ENCODE measurements at regions of chr11 and their contacts with region 1.

Region 1: DNA sequence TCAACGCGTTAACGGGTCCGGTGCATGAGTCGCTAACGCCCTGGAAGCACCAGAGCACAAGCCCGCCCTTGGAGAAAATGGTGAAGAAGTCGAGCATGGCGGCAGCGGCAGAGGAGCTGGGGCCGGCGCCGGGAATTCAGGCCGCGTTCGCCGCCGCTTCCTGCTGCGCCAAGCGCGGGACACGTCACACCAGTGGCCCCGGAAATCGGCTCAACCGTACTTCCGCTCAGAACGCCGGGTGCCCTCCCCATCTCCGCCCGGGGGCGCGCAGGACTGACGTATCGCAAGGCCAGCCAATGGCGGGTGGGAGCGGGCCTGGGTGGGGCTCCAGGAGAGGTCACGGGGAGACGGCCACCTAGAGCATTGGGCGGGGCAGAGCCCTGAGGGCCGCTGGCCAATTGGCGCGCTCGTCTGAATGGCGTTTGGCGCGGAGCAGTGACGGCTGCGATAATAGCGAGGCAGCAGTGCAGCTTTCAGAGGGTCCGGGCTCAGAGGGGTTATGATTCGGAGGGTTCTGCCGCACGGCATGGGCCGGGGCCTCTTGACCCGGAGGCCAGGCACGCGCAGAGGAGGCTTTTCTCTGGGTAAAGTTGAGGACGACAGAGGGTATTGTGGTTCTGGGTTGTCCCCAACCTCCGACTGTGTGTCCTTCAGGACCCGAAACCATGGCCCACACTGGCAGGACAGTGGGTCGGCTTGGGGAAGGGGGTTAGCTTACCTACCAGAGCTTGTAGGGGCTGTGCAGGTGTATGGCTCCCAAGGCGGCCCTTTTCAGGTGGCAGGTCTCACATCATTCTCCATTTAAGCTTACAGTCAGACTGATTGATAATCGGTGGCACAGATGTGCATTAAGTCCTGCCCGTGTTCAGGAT is at the starts of genes FOXRED1 and SRPRA:
- DNase-seq: peak; percentile 100
- ATAC-seq: peak; percentile 99
- H3K4me3 Mint-ChIP-seq: peak within 1 kb of the TSS; percentile 92
- H3K27ac Mint-ChIP-seq: peak within 1 kb of the TSS; percentile 95
- H3K4me1 Mint-ChIP-seq: peaks cover 45% of the 10 kb centered on the region
- H3K27me3 Mint-ChIP-seq: no peaks in the 10 kb centered on the region
- total RNA-seq, gene FOXRED1: 46.5 to 50.4 TPM
- total RNA-seq, gene SRPRA: 99.0 to 103 TPM

Region 2: GRCh38 chr11:126211235-126212088 is 57.5 kb before region 1 on chr11 and contains the starts of genes FAM118B and RPUSD4:
- CTCF ChIA-PET with region 1: no interaction called
- POLR2A ChIA-PET with region 1: interaction called, 10 read pairs
- DNase-seq: peak; percentile 99
- ATAC-seq: peak; percentile 97
- H3K4me3 Mint-ChIP-seq: peak within 1 kb of the TSS; percentile 98
- H3K27ac Mint-ChIP-seq: peak within 1 kb of the TSS; percentile 93
- H3K4me1 Mint-ChIP-seq: peaks cover 30% of the 10 kb centered on the region
- H3K27me3 Mint-ChIP-seq: no peaks in the 10 kb centered on the region
- total RNA-seq, gene FAM118B: 11.8 to 12.8 TPM
- total RNA-seq, gene RPUSD4: 31.6 to 32.1 TPM

Region 3: DNA sequence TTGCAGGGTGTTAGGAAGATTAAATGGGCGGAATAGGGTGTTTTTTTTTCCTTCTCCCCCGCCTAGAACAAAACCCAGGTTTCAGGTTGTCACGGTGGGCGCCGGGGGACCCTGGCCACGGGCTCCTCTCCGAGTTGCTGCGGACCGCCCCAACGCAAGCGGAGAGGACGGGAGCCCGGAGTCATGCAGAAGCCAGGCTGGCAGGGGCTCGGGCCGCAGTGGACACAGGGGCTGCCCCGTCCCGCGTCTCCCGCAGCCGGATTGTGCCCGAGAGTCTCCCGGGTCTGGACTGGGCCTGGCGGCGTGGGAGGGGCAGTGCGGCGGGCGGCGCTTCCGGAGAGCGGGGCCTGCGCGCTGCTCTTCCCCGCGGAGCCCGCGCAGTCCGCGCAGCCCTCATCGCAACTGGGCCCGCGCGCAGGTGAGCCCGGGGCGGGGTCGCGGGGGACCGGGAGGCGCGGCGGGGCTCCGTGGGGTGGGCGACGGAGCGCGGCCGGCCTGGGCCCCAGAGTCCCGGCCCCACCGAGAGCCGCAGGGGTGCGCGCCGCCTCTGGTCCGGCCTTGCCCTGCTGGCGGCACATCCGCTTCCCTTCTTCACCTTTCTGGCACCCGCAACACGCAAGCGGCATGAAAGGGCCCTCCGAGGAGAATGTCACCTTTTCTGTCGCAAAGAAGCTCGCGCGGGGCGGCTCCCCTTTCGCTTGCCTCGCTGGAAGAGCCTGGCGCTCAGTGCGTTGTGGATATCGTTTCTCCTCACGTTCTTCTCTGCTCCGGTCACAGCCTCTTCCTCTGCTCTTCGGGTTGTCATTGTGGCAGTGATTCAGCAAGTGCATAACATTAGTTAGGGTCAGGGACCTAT is 14.0 kb after region 1 on chr11 and contains the start of gene TIRAP:
- CTCF ChIA-PET with region 1: interaction called, 4 read pairs
- POLR2A ChIA-PET with region 1: interaction called, 52 read pairs
- DNase-seq: peak; percentile 78
- ATAC-seq: peak; percentile 87
- H3K4me3 Mint-ChIP-seq: peak within 1 kb of the TSS; percentile 93
- H3K27ac Mint-ChIP-seq: peak within 1 kb of the TSS; percentile 94
- H3K4me1 Mint-ChIP-seq: peaks cover 49% of the 10 kb centered on the region
- H3K27me3 Mint-ChIP-seq: no peaks in the 10 kb centered on the region
- total RNA-seq, gene TIRAP: 15.3 to 15.4 TPM